Right cardiac atrium (tissue), 5 donors: ENCODE measurements at regions of chr2 and their contacts with region 1.

Region 1: DNA sequence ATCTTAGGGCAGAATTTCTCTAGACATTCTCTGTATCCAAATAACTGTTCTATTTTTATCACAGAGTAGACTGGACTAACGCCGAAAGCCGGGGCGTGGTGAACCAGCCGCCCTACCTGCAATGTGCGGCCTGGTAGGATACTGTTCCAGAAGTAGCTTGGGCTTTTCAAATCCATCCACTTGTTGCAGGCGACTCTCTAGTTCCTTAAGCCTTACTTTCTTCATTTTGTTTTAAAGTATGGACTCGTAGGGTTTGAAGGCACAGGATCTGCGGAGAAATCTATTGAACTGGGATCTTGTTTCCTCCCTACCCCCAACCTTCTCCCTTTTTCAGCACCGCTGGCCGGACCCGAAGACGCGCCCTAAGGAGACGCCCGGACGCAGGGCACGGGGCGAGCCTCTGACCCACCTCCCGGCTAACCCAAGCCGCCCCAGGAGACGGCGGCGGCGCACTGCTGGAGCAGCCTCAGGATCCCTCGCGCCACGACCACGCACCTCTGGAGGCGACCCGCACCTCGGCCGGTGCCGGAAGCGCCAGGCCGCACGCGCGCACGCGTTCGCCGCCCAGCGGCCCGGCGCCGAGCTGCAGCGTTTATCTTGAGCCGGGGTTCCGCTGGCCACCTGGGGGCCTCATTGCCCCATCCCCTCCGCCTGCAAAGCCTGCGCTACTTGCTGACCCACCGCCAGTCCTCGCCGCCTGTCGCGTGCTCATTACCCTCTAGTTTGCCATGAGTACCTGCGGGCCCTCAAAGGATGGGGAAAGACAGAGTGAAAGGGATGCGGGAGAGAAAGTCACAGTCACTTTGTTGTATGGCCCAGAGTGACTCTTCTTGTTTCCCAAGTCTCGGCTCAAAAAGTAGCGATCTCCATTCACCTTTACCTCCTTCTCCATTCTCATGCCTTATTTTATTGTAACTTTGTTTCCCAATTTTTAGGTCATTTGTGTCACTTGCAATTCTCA is at the start of gene METTL5:
- DNase-seq: peak; percentile 85 to 94 (median 93)
- ATAC-seq: peak; percentile 70 to 75
- H3K4me3 ChIP-seq: peak within 1 kb of the TSS; percentile 61
- H3K27ac ChIP-seq: peak within 1 kb of the TSS; percentile 22
- H3K4me1 ChIP-seq: no peaks in the 10 kb centered on the region
- H3K27me3 ChIP-seq: no peaks in the 10 kb centered on the region
- total RNA-seq, gene METTL5: 51.3 to 62.3 (median 58.1) TPM

Region 2: DNA sequence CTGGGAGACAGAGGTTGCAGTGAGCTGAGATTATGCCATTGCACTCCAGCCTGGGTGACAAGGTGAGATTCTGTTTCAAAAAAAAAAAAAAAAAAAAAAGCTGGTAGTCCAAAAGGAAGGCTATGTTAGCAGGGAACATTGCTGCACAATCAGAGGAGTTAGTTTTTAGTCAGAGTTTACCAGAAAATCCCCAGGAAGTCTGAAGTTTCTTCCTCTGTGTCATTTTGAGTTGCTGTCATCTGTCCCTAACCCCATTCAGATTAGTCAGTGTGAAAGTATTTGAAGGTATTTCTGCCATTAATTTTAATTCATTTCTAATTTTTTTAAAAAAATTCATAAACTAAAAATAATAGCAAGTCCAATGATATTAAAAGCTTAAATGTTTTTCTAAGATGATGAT is 1402.1 kb before region 1 on chr2:
- intact Hi-C with region 1: no loop called
- DNase-seq: no peak
- ATAC-seq: no peak
- H3K4me3 ChIP-seq: no peak overlapping the region
- H3K27ac ChIP-seq: no peak overlapping the region
- H3K4me1 ChIP-seq: no peaks in the 10 kb centered on the region
- H3K27me3 ChIP-seq: no peaks in the 10 kb centered on the region

Region 3: GRCh38 chr2:169871994-169872393 is 47.3 kb after region 1 on chr2:
- intact Hi-C with region 1: loop called in 2 of 4 experiments (anchors 2 to 5 kb)
- DNase-seq: no peak
- ATAC-seq: no peak
- H3K4me3 ChIP-seq: no peak overlapping the region
- H3K27ac ChIP-seq: no peak overlapping the region
- H3K4me1 ChIP-seq: peaks cover 2% of the 10 kb centered on the region
- H3K27me3 ChIP-seq: no peaks in the 10 kb centered on the region

Region 4: GRCh38 chr2:169877398-169877797 is 52.7 kb after region 1 on chr2:
- intact Hi-C with region 1: loop called in 2 of 4 experiments (anchors 2 to 5 kb)
- DNase-seq: no peak
- ATAC-seq: no peak
- H3K4me3 ChIP-seq: no peak overlapping the region
- H3K27ac ChIP-seq: no peak overlapping the region
- H3K4me1 ChIP-seq: no peaks in the 10 kb centered on the region
- H3K27me3 ChIP-seq: no peaks in the 10 kb centered on the region

Region 5: DNA sequence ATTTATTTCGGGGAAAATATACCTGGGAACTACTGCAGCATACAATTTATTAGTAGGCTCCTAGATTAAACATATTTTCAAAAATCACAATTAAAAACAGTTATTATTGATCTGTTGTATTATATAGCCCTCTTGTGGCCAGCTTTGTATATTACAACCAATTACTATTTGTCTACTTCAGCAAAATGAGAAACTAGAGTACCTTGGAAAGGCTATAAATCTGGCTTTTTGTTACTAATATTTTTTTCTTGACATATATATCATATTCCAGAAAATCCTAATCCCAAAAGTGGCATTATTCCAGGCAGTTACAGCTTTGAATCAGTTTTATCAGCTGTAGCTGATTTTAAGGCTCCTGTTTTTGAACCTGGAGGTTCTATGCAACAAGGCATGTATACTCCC is 103.8 kb after region 1 on chr2:
- intact Hi-C with region 1: loop called (anchors 5 to 10 kb)
- DNase-seq: no peak
- ATAC-seq: no peak
- H3K4me3 ChIP-seq: no peak overlapping the region
- H3K27ac ChIP-seq: no peak overlapping the region
- H3K4me1 ChIP-seq: no peaks in the 10 kb centered on the region
- H3K27me3 ChIP-seq: no peaks in the 10 kb centered on the region